ENCODE measurements at regions of chr17 and their contacts with region 1.

Region 1: DNA sequence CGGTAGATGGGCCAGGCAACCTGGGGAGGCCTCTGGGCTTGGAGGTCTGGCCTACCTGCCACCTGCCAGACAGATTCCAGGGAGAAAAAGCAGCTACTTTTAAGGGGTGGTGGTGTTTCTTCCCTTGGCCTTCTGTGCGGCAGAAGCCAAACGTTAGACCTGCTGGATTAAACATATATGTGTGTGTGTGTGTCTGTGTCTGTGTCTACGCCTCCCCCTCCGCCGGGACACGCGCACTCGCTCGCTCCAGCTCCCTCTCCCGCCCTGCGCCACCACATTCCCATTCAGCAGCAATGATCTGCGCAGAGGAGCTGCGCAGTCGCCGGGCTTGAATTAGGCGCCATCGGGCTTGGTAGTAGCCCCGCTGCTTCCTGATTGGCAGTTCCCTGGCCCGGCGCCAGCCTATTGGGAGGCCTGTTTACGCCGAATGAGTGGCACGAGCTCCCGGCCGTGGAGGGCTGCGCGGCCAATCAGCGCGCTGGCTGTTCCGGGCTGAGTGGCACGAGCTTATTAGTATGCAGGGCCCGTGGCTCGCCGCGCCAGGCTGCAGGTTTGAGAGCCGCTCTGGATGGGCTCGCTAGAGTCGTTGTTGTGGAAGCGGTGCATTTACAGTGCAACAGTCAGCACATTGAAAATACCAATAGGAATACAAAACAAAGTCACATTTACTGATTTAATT is at the start of gene BAHCC1:
- DNase-seq: peak; percentile 100
- H3K4me3 ChIP-seq: peak within 1 kb of the TSS; percentile 81 to 93
- H3K27ac ChIP-seq: peak within 1 kb of the TSS; percentile 94 to 97
- H3K4me1 ChIP-seq: peaks cover 14 to 22% of the 10 kb centered on the region in 2 donors
- H3K27me3 ChIP-seq: no peaks in the 10 kb centered on the region
- CTCF ChIP-seq: no peak
- total RNA-seq, gene BAHCC1: 29.1 TPM

Region 2: GRCh38 chr17:81339534-81340296 is 55.3 kb before region 1 on chr17:
- intact Hi-C with region 1: no loop called
- DNase-seq: no peak
- H3K4me3 ChIP-seq: no peak overlapping the region
- H3K27ac ChIP-seq: peak overlapping the region in 1 of 2 donors; percentile 38
- H3K4me1 ChIP-seq: peaks cover 4 to 36% of the 10 kb centered on the region in 2 donors
- H3K27me3 ChIP-seq: no peaks in the 10 kb centered on the region
- CTCF ChIP-seq: no peak

Region 3: DNA sequence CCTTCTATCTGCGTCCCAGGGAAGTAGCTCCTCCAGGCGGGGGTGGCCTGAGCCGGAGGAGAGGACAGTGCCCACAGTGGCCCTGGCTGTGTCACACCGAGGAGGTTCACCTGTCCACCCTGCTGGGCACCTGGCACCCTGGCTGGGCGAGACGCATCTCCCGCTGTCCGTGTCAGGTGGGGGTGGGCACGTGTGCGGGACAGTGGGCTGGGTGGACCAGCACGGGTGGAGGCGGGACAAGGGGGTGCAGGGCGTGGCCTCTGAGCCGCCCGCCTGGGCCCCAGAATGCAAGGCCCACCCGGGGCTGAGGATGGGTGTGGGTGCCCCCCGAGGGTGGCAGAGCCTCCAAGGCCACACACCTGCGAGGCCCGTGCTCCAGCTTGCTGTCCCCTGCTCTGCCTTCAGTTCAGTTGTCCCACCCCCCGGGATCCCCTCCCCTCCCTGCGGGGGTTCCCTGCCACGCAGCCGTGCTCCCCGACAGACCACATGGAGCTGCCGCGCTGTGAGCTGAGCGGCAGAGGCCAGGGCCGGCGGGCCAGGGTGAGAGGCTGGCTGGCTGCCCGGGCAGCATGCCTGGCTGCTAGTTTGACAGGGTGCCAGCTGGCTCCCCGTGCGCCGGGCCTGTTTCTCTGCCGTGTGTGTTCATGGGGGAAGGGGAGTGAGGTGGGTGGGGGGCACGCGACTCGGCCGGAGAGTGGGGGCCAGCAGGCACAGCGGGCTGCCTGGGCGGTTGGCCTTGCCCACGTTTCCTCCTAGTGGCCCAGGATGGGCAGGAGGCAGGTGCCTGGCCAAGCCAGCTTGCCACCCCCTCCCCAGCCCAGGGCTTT is 34.1 kb after region 1 on chr17:
- intact Hi-C with region 1: loop called (anchors 2 kb)
- DNase-seq: peak in 1 of 2 donors; percentile 88
- H3K4me3 ChIP-seq: peak overlapping the region; percentile 37 to 50
- H3K27ac ChIP-seq: peak overlapping the region; percentile 70 to 75
- H3K4me1 ChIP-seq: peaks cover 30 to 50% of the 10 kb centered on the region in 2 donors
- H3K27me3 ChIP-seq: no peaks in the 10 kb centered on the region
- CTCF ChIP-seq: no peak

Measured in ascending aorta (tissue), 2 donors.